Activated CD8-positive, alpha-beta T cell treated with anti-CD3 and anti-CD28 coated beads, Interleukin-2, amount 10 ng/mL, durations not matched to agents 7 days and 5 days (primary cell): ENCODE measurements at regions of chr9 and their contacts with region 1.

Region 1: GRCh38 chr9:35102926-35103659 is at the start of gene STOML2:
- DNase-seq: peak; percentile 96
- ATAC-seq: peak; percentile 93
- H3K4me3 Mint-ChIP-seq: peak within 1 kb of the TSS; percentile 97
- H3K27ac Mint-ChIP-seq: peak within 1 kb of the TSS; percentile 96
- H3K4me1 Mint-ChIP-seq: peaks cover 40% of the 10 kb centered on the region
- H3K27me3 Mint-ChIP-seq: no peaks in the 10 kb centered on the region
- total RNA-seq, gene STOML2: 130 to 138 TPM

Region 2: DNA sequence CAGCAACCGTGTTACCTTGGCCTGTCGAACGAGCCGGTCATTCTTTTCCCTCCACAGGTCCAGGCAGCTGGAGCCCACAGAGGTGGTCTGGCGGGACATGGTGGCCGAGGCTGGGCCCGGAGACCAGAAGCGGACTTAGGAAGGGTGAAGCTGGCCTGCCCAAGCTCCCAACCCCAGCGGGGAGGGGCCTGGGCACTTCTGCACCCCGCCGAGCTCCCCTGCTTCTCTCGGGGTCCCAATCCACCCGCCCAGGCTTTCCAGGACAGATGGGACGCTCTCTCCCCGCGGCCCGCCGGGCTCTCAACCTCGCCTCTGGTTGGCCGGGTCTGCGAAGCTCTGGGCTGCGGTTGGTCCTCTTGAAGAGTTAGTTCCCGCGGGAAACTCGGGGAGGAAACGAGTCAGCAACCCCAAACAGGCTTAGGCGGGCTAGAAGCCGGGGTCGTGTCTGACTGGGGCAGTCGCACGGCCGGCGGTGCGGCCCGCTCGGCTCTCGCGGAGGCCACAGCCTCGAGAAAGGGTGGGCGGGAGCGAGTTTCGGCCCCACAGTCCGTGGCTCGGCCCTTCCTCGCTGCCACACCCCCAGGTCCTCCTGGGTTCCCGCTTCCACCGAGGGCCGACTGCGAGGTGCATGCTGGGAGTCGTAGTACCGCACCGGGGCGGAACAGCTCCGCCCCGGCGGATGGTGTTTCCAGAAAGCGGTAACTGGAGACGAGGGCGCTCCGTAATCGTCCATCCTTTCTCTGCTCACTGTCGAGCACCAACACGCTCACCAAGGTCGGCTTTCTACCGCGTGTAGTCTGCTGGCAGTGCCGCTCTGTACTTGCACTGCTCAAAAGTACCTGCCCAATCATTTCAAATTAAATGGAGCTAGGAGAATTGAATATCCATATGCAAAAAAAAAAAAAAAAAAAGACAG is 23.4 kb before region 1 on chr9 and contains the start of gene FANCG:
- CTCF ChIA-PET with region 1: interaction called, 111 read pairs
- POLR2A ChIA-PET with region 1: interaction called, 94 read pairs
- DNase-seq: peak; percentile 90
- ATAC-seq: peak; percentile 91
- H3K4me3 Mint-ChIP-seq: peak within 1 kb of the TSS; percentile 95
- H3K27ac Mint-ChIP-seq: peak within 1 kb of the TSS; percentile 99
- H3K4me1 Mint-ChIP-seq: peaks cover 28% of the 10 kb centered on the region
- H3K27me3 Mint-ChIP-seq: no peaks in the 10 kb centered on the region
- total RNA-seq, gene FANCG: 125 to 136 TPM

Region 3: GRCh38 chr9:35257986-35258675 is 155.0 kb after region 1 on chr9:
- CTCF ChIA-PET with region 1: no interaction called
- POLR2A ChIA-PET with region 1: no interaction called
- DNase-seq: no peak
- ATAC-seq: no peak
- H3K4me3 Mint-ChIP-seq: no peak overlapping the region
- H3K27ac Mint-ChIP-seq: no peak overlapping the region
- H3K4me1 Mint-ChIP-seq: peaks cover 4% of the 10 kb centered on the region
- H3K27me3 Mint-ChIP-seq: peaks cover 8% of the 10 kb centered on the region

Region 4: DNA sequence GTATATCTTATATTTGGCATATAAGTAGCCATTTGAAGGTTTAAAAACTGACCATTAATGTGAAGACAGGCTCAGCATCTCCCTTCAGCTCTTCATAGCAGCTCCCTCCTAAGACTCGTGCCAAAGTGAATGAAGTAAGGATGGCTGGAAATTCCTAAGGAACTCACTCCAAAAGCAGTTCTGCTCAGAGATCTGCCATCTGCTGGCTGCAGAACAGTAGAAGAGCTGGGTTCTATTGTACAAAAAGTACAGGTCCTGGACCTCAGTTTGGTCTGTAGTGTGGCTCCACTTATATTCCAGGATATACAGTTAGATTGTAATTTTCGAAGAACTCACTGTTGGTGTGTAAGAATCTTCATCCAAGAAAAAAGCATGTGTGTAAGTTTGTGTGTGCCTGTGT is 281.9 kb after region 1 on chr9:
- CTCF ChIA-PET with region 1: no interaction called
- POLR2A ChIA-PET with region 1: no interaction called
- DNase-seq: no peak
- ATAC-seq: no peak
- H3K4me3 Mint-ChIP-seq: no peak overlapping the region
- H3K27ac Mint-ChIP-seq: no peak overlapping the region
- H3K4me1 Mint-ChIP-seq: no peaks in the 10 kb centered on the region
- H3K27me3 Mint-ChIP-seq: peaks cover 5% of the 10 kb centered on the region